Transverse colon (tissue), 4 donors: ENCODE measurements at regions of chr16 and their contacts with region 1.

Region 1: GRCh38 chr16:57045694-57046381 is 46.5 kb upstream of the CPNE2 start:
- DNase-seq: peak; percentile 57
- H3K4me3 ChIP-seq: no peak overlapping the region
- H3K27ac ChIP-seq: no peak overlapping the region
- H3K4me1 ChIP-seq: peaks cover 0 to 8% (median 0%) of the 10 kb centered on the region in 4 donors
- H3K27me3 ChIP-seq: no peaks in the 10 kb centered on the region
- CTCF ChIP-seq: peak; percentile 30 to 45 (median 39)
- EP300 ChIP-seq: no peak
- POLR2A ChIP-seq: no peak

Region 2: GRCh38 chr16:56970934-56971767 is 74.7 kb before region 1 on chr16:
- in situ Hi-C with region 1: loop called in 1 of 4 experiments (anchors 10 kb)
- intact Hi-C with region 1: no loop called
- DNase-seq: no peak
- H3K4me3 ChIP-seq: no peak overlapping the region
- H3K27ac ChIP-seq: no peak overlapping the region
- H3K4me1 ChIP-seq: peaks cover 0 to 3% (median 0%) of the 10 kb centered on the region in 4 donors
- H3K27me3 ChIP-seq: no peaks in the 10 kb centered on the region
- CTCF ChIP-seq: no peak
- EP300 ChIP-seq: no peak
- POLR2A ChIP-seq: no peak

Region 3: GRCh38 chr16:57069635-57070370 is 24.0 kb after region 1 on chr16:
- in situ Hi-C with region 1: no loop called
- intact Hi-C with region 1: loop called (anchors 1 kb)
- DNase-seq: no peak
- H3K4me3 ChIP-seq: no peak overlapping the region
- H3K27ac ChIP-seq: no peak overlapping the region
- H3K4me1 ChIP-seq: no peaks in the 10 kb centered on the region
- H3K27me3 ChIP-seq: no peaks in the 10 kb centered on the region
- CTCF ChIP-seq: no peak
- EP300 ChIP-seq: no peak
- POLR2A ChIP-seq: no peak